ENCODE measurements at regions of chr5 and their contacts with region 1.

Region 1: GRCh38 chr5:138352071-138352721 is at the start of gene KDM3B:
- DNase-seq: peak; percentile 94
- ATAC-seq: peak; percentile 76
- H3K4me3 Mint-ChIP-seq: peak within 1 kb of the TSS; percentile 99
- H3K27ac Mint-ChIP-seq: peak within 1 kb of the TSS; percentile 96
- H3K4me1 Mint-ChIP-seq: peaks cover 44% of the 10 kb centered on the region
- H3K27me3 Mint-ChIP-seq: no peaks in the 10 kb centered on the region
- total RNA-seq, gene KDM3B: 39.0 to 40.9 TPM

Region 2: GRCh38 chr5:137822158-137822764 is 529.9 kb before region 1 on chr5:
- CTCF ChIA-PET with region 1: no interaction called
- POLR2A ChIA-PET with region 1: no interaction called
- intact Hi-C with region 1: no loop called
- DNase-seq: peak; percentile 15
- ATAC-seq: no peak
- H3K4me3 Mint-ChIP-seq: no peak overlapping the region
- H3K27ac Mint-ChIP-seq: no peak overlapping the region
- H3K4me1 Mint-ChIP-seq: no peaks in the 10 kb centered on the region
- H3K27me3 Mint-ChIP-seq: no peaks in the 10 kb centered on the region

Region 3: DNA sequence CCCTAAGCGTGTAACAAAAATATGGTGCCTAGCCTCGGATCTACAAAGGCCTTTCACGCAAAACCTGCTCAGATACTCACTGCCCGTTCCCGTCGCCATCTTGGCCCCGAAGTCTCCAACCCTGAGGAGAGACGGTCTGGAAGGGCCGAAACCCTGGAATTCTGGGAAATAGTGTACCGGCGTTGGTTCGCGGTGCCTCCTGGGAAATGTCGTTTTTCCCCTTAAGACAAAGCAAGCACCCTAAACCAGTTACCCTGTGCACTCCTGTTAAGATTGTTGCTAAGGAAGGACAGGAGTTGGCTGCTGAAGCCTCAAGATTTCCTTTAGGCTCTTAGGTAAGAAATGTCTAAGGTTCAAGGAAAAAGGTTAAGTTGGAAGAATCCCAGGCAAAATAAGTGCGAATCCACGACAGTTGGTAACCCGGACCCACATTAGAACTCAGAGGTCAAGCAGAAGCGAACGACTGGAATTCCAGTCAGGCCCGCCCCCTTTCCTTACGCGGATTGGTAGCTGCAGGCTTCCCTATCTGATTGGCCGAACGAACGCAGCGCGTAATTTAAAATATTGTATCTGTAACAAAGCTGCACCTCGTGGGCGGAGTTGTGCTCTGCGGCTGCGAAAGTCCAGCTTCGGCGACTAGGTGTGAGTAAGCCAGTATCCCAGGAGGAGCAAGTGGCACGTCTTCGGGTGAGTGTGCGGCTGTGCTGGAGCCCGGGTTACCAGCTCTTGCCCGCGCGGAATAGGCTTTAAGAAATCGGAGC is 173.5 kb before region 1 on chr5 and contains the starts of genes BRD8 and KIF20A:
- CTCF ChIA-PET with region 1: interaction called, 33 read pairs
- POLR2A ChIA-PET with region 1: interaction called, 5 read pairs
- intact Hi-C with region 1: loop called (anchors 1 to 2 kb)
- DNase-seq: peak; percentile 96
- ATAC-seq: peak; percentile 93
- H3K4me3 Mint-ChIP-seq: no peak within 1 kb of the TSS
- H3K27ac Mint-ChIP-seq: peak within 1 kb of the TSS; percentile 73
- H3K4me1 Mint-ChIP-seq: peaks cover 16% of the 10 kb centered on the region
- H3K27me3 Mint-ChIP-seq: no peaks in the 10 kb centered on the region
- total RNA-seq, gene BRD8: 60.7 to 61.4 TPM
- total RNA-seq, gene KIF20A: 66.6 to 76.3 TPM

Region 4: GRCh38 chr5:138337685-138338410 is 14.3 kb before region 1 on chr5 and contains the start of gene FAM53C:
- CTCF ChIA-PET with region 1: interaction called, 308 read pairs
- POLR2A ChIA-PET with region 1: interaction called, 73 read pairs
- intact Hi-C with region 1: loop called (anchors 1 to 2 kb)
- DNase-seq: peak; percentile 95
- ATAC-seq: peak; percentile 88
- H3K4me3 Mint-ChIP-seq: peak within 1 kb of the TSS; percentile 84
- H3K27ac Mint-ChIP-seq: peak within 1 kb of the TSS; percentile 97
- H3K4me1 Mint-ChIP-seq: peaks cover 38% of the 10 kb centered on the region
- H3K27me3 Mint-ChIP-seq: no peaks in the 10 kb centered on the region
- total RNA-seq, gene FAM53C: 22.8 to 25.9 TPM

Region 5: DNA sequence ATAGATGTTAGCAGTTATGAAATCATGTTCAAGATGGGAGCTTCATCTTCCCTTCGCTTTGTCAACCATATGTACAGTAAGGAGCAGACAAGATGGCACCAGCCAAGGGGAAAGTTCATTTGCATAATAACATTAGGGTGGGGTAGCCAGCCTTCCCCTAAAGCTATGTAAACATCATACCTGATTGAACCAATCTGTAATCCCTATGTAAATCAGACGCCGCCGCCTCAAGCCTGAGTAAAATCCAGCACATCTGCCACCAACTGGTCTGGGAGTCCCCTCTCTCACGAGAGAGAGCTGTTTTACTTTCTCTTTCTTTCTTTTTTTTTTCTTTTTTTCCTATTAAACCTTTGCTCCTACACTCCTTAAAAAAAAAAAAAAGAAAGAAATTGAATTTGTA is 55.8 kb after region 1 on chr5:
- CTCF ChIA-PET with region 1: interaction called, 8 read pairs
- POLR2A ChIA-PET with region 1: no interaction called
- intact Hi-C with region 1: loop called in 1 of 2 experiments (anchors 2 kb)
- DNase-seq: peak; percentile 68
- ATAC-seq: peak; percentile 94
- H3K4me3 Mint-ChIP-seq: no peak overlapping the region
- H3K27ac Mint-ChIP-seq: peak overlapping the region; percentile 60
- H3K4me1 Mint-ChIP-seq: peaks cover 13% of the 10 kb centered on the region
- H3K27me3 Mint-ChIP-seq: no peaks in the 10 kb centered on the region

Region 6: GRCh38 chr5:139293504-139294373 is 941.5 kb after region 1 on chr5 and contains the start of gene MATR3:
- CTCF ChIA-PET with region 1: no interaction called
- POLR2A ChIA-PET with region 1: no interaction called
- intact Hi-C with region 1: loop called in 1 of 2 experiments (anchors 5 kb)
- DNase-seq: peak; percentile 98
- ATAC-seq: peak; percentile 92
- H3K4me3 Mint-ChIP-seq: peak within 1 kb of the TSS; percentile 97
- H3K27ac Mint-ChIP-seq: peak within 1 kb of the TSS; percentile 99
- H3K4me1 Mint-ChIP-seq: peaks cover 37% of the 10 kb centered on the region
- H3K27me3 Mint-ChIP-seq: no peaks in the 10 kb centered on the region
- total RNA-seq, gene MATR3: 113 to 133 TPM